Activated CD4-positive, alpha-beta T cell treated with anti-CD3 and anti-CD28 coated beads, Interleukin-2, amount 10 ng/mL, durations not matched to agents 24 days and 14 days (primary cell): ENCODE measurements at regions of chr9 and their contacts with region 1.

Region 1: DNA sequence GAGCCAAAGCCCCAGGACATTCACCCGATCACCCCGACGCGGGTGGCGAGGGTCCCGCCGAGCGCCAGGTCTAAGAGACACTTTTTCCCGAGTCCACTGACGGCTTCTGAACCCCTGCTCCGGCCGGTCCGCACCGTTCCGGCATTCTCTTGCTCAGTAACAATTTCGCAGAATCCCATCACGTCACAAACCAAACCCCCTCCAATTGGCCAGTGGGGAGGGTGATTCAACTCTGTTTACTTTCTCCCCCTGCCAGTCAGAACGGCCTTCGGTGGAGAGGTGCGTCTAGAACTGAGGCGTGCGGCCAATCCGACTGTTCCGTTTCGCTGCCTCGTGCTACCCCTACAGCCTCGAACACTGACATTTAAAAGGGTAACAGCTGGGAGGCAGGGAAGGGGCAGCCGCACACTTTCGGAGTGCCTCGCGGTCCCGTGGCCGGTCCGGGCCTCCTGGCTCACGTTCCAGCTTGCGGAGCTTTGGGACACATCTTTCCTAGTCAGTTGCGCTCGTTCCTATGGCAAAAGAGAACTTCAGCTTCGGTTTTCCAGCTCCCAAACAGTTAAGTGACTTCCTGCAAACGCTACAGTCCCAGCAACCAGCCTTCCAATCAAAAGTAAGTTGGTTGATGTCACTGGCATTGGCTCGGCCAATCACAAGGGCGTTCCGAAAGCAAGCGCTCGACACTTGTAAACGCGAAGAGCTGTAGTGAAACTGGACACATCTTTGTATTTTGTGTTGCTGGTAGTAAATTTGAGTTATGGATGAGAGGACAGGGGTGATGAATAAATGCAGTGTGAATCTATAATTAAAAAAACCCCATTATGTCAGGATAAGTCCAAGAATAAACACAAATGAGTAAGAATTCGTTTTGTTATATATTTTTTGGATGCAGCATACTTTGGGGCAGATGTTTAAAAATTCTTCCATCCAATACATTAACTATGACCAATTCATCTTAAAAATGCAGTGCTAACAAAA is at the start of gene KLF9:
- DNase-seq: peak; percentile 97
- H3K4me3 Mint-ChIP-seq: peak within 1 kb of the TSS; percentile 100
- H3K27ac Mint-ChIP-seq: peak within 1 kb of the TSS; percentile 100
- H3K4me1 Mint-ChIP-seq: peaks cover 45% of the 10 kb centered on the region
- H3K27me3 Mint-ChIP-seq: no peaks in the 10 kb centered on the region
- total RNA-seq, gene KLF9: 16.3 and 16.5 TPM in 2 replicates

Region 2: DNA sequence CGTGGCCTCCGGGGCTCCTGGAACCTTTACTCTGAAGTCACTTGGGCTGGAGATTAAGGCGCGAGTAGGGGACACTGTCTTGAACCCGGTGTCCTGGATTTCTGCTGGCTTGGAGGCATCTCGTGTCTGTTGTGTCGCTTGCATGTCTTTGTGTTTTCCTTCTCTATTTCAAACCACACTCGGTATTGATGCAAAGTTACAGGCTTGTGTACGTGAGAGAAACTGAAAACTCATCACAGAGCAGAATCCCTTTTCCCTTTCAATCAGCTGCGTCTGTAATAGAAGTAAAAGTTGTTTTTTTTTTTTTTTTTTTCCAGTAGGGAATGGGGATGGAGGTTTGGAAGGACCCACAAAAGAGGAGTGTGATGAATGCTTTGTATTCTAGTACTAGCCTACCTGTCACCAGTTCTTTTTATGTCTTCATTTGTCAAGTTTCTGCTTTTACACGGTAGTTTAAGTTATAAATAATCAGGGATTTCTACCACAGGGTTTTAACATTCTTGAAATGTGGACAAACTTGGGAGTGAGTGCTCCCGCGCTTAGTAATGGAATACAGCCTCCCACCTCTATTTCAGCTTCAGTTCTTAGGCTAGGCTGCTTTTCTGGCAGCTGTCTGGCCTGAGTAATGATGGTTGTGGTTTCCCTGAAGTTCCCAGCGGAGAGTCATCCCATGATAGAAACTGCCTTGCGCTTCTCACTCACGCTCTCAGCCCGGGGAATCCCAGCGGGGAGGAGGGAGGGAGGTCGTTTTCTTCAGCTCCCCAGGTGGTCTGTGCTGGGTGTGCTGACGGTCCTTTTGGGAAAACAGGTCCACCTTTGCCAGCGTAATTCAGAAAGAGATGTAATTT is 1239.2 kb before region 1 on chr9:
- intact Hi-C with region 1: loop called (anchors 10 kb)
- DNase-seq: peak; percentile 80
- H3K4me3 Mint-ChIP-seq: peak overlapping the region; percentile 84
- H3K27ac Mint-ChIP-seq: peak overlapping the region; percentile 78
- H3K4me1 Mint-ChIP-seq: peaks cover 61% of the 10 kb centered on the region
- H3K27me3 Mint-ChIP-seq: peaks cover 24% of the 10 kb centered on the region

Region 3: GRCh38 chr9:69759421-69760277 is 654.4 kb before region 1 on chr9 and contains the start of gene PTAR1:
- intact Hi-C with region 1: loop called (anchors 10 kb)
- DNase-seq: peak; percentile 97
- H3K4me3 Mint-ChIP-seq: peak within 1 kb of the TSS; percentile 98
- H3K27ac Mint-ChIP-seq: peak within 1 kb of the TSS; percentile 96
- H3K4me1 Mint-ChIP-seq: peaks cover 29% of the 10 kb centered on the region
- H3K27me3 Mint-ChIP-seq: no peaks in the 10 kb centered on the region
- total RNA-seq, gene PTAR1: 51.0 and 56.1 TPM in 2 replicates

Region 4: GRCh38 chr9:69822091-69822750 is 591.9 kb before region 1 on chr9:
- intact Hi-C with region 1: loop called (anchors 5 kb)
- DNase-seq: peak; percentile 54
- H3K4me3 Mint-ChIP-seq: no peak overlapping the region
- H3K27ac Mint-ChIP-seq: no peak overlapping the region
- H3K4me1 Mint-ChIP-seq: peaks cover 40% of the 10 kb centered on the region
- H3K27me3 Mint-ChIP-seq: peaks cover 17% of the 10 kb centered on the region

Region 5: DNA sequence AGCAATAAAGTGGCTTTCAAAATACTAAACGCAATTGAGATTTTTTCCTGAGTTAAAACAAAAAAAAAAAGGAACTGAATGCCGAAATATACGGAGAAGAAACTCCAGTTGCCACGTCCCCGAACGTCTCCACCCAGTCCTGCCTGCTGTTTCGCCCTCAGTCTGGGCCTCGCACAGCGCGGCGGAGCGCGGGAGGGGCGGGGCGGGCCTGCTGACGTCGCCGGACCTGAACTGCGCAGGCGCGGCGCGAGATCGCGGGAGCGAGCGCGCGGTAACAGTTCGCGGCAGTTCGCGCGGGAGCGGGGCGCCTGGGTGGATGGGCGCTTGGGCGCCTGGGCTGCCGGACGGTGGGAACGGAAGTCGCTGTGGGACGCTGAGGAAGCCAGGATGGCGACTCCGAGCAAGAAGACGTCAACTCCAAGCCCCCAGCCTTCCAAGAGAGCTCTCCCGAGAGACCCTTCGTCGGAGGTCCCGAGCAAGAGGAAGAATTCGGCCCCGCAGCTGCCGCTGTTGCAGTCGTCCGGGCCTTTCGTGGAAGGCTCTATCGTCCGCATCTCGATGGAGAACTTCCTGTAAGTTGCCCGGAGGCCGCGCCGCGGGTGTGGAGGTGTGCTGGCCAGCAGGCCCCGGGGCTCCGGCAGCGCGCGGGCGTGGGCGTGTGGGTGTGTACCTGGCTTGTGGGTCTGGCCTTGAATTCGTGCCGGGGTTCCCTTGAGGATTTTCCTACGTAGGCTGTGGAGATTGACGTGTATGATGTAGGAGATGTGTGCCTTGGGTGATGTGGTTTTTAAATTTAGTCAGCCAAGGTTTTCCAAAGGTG is 155.2 kb before region 1 on chr9 and contains the start of gene SMC5:
- intact Hi-C with region 1: loop called (anchors 1 kb)
- DNase-seq: peak; percentile 98
- H3K4me3 Mint-ChIP-seq: peak within 1 kb of the TSS; percentile 91
- H3K27ac Mint-ChIP-seq: peak within 1 kb of the TSS; percentile 85
- H3K4me1 Mint-ChIP-seq: peaks cover 49% of the 10 kb centered on the region
- H3K27me3 Mint-ChIP-seq: peaks cover 11% of the 10 kb centered on the region
- total RNA-seq, gene SMC5: 47.0 and 50.7 TPM in 2 replicates

Region 6: GRCh38 chr9:70519912-70520724 is 106.0 kb after region 1 on chr9:
- intact Hi-C with region 1: loop called (anchors 1 kb)
- DNase-seq: peak; percentile 67
- H3K4me3 Mint-ChIP-seq: peak overlapping the region; percentile 69
- H3K27ac Mint-ChIP-seq: peak overlapping the region; percentile 85
- H3K4me1 Mint-ChIP-seq: peaks cover 28% of the 10 kb centered on the region
- H3K27me3 Mint-ChIP-seq: no peaks in the 10 kb centered on the region

Region 7: DNA sequence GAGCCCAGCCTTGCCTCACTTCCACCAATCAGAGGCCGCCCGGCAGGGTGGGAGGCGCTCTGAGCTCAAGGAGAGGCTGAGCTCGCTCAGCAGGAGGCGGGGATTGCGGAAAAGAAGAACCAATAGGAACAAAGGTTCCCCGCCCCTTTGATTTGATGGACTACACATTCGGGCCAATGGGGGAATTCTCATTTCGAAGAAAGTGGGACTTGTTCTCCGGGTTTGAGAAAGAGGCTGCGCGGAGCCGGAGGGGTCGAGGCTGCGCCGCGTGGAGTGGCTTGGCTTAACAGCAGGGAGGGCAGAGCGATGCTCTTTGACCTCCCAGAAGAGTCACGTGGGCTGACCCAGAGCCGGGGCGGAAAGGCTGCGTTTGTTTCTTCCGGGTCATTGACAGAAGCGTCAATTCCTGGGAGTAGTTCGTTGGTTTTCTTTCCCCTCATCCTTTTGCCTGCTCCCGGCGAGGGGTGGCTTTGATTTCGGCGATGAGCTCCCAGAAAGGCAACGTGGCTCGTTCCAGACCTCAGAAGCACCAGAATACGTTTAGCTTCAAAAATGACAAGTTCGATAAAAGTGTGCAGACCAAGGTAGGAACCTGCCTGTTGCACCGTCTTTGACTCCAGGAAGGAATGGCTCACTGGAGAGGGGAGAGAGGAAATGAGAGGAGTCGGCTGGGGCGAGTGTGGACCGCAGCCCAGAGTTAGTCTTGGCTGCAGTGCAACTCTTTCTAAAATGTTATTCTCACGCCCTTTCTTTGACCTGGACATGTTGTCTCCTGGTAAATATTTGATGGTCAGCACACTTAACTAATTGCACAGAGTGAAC is 1497.4 kb after region 1 on chr9 and contains the start of gene C9orf85:
- intact Hi-C with region 1: loop called (anchors 10 kb)
- DNase-seq: peak; percentile 99
- H3K4me3 Mint-ChIP-seq: peak within 1 kb of the TSS; percentile 100
- H3K27ac Mint-ChIP-seq: peak within 1 kb of the TSS; percentile 99
- H3K4me1 Mint-ChIP-seq: peaks cover 56% of the 10 kb centered on the region
- H3K27me3 Mint-ChIP-seq: no peaks in the 10 kb centered on the region
- total RNA-seq, gene C9orf85: 9.4 and 11.6 TPM in 2 replicates